ENCODE measurements at regions of chr2 and their contacts with region 1.

Region 1: DNA sequence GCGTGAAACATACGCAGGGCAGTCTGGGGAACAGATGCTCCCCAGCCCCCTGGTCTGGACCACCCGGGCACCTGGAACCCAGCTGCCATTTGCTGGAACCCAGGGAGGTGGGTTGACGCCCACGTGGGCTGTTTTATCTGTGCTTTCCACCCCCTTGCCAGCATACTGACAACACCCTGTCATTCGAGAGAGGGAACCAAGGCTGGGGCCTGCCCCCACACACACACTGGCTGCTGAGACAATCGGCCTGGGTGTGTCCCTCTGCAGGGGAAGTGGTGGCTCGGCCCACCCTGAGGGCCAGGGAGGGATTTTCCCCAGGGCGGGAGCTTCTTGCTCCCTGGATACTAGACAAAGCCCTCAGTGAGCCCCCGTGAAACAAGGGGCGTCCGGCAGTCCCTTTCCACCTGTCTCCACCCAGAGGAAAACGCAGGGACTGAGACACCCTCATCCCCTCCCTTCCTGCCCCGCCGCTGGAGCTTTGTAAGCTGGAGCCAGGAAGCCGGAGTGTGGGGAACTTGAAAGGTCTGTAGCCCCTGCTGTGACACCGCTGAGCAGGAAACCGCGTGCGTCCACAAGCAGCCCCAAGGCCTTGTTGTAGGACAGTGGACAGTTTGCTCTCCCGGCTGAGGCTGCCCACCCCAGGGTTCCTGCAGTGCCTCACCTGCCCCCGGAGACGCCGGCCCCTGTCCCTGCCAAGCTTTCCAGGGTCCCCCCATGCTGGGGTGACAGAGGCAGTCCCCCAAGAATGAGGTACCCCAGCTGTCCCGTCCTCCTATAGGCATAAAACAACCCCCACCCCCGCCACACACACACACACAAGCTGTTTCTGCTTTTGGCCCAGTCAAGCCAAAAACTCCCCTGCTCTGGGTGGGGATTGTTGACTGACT is 14.1 kb upstream of the KLF11 start:
- DNase-seq: peak; percentile 54
- H3K4me3 ChIP-seq: no peak overlapping the region
- H3K27ac ChIP-seq: no peak overlapping the region
- H3K4me1 ChIP-seq: peaks cover 11% of the 10 kb centered on the region
- H3K27me3 ChIP-seq: no peaks in the 10 kb centered on the region
- CTCF ChIP-seq: no peak

Region 2: GRCh38 chr2:9990735-9991134 is 38.5 kb before region 1 on chr2:
- CTCF ChIA-PET with region 1: no interaction called
- POLR2A ChIA-PET with region 1: no interaction called
- intact Hi-C with region 1: loop called (anchors 5 kb)
- DNase-seq: peak; percentile 90
- H3K4me3 ChIP-seq: peak overlapping the region; percentile 24
- H3K27ac ChIP-seq: peak overlapping the region; percentile 41
- H3K4me1 ChIP-seq: peaks cover 24% of the 10 kb centered on the region
- H3K27me3 ChIP-seq: no peaks in the 10 kb centered on the region
- CTCF ChIP-seq: no peak